H1 (cell line): ENCODE measurements at regions of chr11 and their contacts with region 1.

Region 1: GRCh38 chr11:11022125-11022730 is 164.4 kb upstream of the ZBED5 start:
- DNase-seq: no peak
- H3K4me3 ChIP-seq: no peak overlapping the region
- H3K27ac ChIP-seq: no peak overlapping the region
- H3K4me1 ChIP-seq: peaks cover 0 to 4% (median 2%) of the 10 kb centered on the region in 4 experiments; a peak in 5 of 7 replicates
- H3K27me3 ChIP-seq: peaks cover 0 to 3% (median 0%) of the 10 kb centered on the region in 4 experiments; a peak in 1 of 7 replicates
- CTCF ChIP-seq: peak in 2 of 3 experiments; percentile 20 to 29; a peak in 2 of 4 replicates
- EP300 ChIP-seq: no peak
- POLR2A ChIP-seq: no peak
- RAD21 ChIP-seq: peak in 1 of 2 experiments; percentile 39; a peak in 3 of 4 replicates

Region 2: DNA sequence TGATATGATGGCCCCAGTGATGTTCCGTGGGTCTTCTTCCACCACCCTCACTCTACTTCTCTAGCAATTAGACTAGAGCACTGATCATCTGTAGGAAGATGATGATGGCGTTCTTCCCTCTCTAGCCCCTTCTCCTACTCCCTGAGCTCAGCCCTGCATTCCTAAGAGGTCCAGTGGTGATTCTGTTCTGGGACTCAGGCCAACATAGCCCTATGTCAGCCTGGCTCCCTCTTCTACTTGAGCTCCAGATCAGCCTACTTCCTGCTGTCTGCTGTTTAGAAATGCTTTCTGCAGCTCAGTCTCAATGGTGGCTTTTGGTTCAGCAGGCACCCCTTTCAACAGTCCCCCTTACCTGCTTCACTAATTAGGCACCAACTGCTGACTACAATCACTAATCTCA is 78.3 kb before region 1 on chr11:
- CTCF ChIA-PET with region 1: interaction called, 25 read pairs
- POLR2A ChIA-PET with region 1: no interaction called
- DNase-seq: no peak
- H3K4me3 ChIP-seq: no peak overlapping the region
- H3K27ac ChIP-seq: no peak overlapping the region
- H3K4me1 ChIP-seq: no peaks in the 10 kb centered on the region
- H3K27me3 ChIP-seq: no peaks in the 10 kb centered on the region
- CTCF ChIP-seq: no peak
- EP300 ChIP-seq: no peak
- POLR2A ChIP-seq: no peak
- RAD21 ChIP-seq: no peak

Region 3: GRCh38 chr11:11010624-11011127 is 11.6 kb before region 1 on chr11:
- CTCF ChIA-PET with region 1: interaction called, 17 read pairs
- POLR2A ChIA-PET with region 1: no interaction called
- DNase-seq: no peak
- H3K4me3 ChIP-seq: no peak overlapping the region
- H3K27ac ChIP-seq: no peak overlapping the region
- H3K4me1 ChIP-seq: peaks cover 3 to 8% (median 5%) of the 10 kb centered on the region in 4 experiments; a peak in 5 of 7 replicates
- H3K27me3 ChIP-seq: no peaks in the 10 kb centered on the region; a peak in 2 of 7 replicates
- CTCF ChIP-seq: peak; percentile 16 to 61 (median 47)
- EP300 ChIP-seq: no peak
- POLR2A ChIP-seq: no peak
- RAD21 ChIP-seq: peak; percentile 34 to 55; a peak in 3 of 4 replicates